ENCODE measurements at regions of chr11 and their contacts with region 1.

Region 1: DNA sequence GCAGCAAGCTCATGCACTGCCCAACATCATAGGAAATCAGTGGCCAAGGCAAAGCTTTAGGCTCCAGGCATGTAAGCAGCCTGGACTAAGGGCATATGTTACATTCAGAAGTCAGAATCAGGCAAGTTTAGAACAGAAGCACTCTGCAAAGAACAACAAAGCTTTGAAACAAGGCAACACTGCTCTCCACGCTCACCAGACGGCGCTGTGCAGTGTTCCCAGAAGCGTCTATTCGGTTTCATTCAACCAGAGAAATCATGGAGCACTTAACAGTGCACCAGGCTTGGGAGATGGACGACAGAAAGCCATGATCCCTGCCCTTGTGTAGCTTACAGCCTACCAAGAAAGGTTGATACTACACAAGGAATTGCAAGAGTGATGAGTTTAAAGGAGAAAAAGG is 555.8 kb downstream of the BUD13 start:
- DNase-seq: peak; percentile 75
- ATAC-seq: peak; percentile 71
- H3K4me3 Mint-ChIP-seq: no peak overlapping the region
- H3K27ac Mint-ChIP-seq: no peak overlapping the region
- H3K4me1 Mint-ChIP-seq: peaks cover 13% of the 10 kb centered on the region
- H3K27me3 Mint-ChIP-seq: no peaks in the 10 kb centered on the region
- CTCF ChIP-seq: peak; percentile 71

Region 2: GRCh38 chr11:116170526-116171122 is 46.4 kb before region 1 on chr11:
- CTCF ChIA-PET with region 1: interaction called, 70 read pairs
- POLR2A ChIA-PET with region 1: no interaction called
- DNase-seq: peak; percentile 41
- ATAC-seq: peak; percentile 38
- H3K4me3 Mint-ChIP-seq: no peak overlapping the region
- H3K27ac Mint-ChIP-seq: no peak overlapping the region
- H3K4me1 Mint-ChIP-seq: peaks cover 33% of the 10 kb centered on the region
- H3K27me3 Mint-ChIP-seq: no peaks in the 10 kb centered on the region; the same call in 1 of the 2 replicates
- CTCF ChIP-seq: no peak

Region 3: GRCh38 chr11:116193321-116194131 is 23.5 kb before region 1 on chr11:
- CTCF ChIA-PET with region 1: interaction called, 33 read pairs
- POLR2A ChIA-PET with region 1: no interaction called
- DNase-seq: peak; percentile 74
- ATAC-seq: peak; percentile 72
- H3K4me3 Mint-ChIP-seq: peak overlapping the region; percentile 76
- H3K27ac Mint-ChIP-seq: peak overlapping the region; percentile 88
- H3K4me1 Mint-ChIP-seq: peaks cover 45% of the 10 kb centered on the region
- H3K27me3 Mint-ChIP-seq: peaks cover 11% of the 10 kb centered on the region
- CTCF ChIP-seq: no peak

Region 4: DNA sequence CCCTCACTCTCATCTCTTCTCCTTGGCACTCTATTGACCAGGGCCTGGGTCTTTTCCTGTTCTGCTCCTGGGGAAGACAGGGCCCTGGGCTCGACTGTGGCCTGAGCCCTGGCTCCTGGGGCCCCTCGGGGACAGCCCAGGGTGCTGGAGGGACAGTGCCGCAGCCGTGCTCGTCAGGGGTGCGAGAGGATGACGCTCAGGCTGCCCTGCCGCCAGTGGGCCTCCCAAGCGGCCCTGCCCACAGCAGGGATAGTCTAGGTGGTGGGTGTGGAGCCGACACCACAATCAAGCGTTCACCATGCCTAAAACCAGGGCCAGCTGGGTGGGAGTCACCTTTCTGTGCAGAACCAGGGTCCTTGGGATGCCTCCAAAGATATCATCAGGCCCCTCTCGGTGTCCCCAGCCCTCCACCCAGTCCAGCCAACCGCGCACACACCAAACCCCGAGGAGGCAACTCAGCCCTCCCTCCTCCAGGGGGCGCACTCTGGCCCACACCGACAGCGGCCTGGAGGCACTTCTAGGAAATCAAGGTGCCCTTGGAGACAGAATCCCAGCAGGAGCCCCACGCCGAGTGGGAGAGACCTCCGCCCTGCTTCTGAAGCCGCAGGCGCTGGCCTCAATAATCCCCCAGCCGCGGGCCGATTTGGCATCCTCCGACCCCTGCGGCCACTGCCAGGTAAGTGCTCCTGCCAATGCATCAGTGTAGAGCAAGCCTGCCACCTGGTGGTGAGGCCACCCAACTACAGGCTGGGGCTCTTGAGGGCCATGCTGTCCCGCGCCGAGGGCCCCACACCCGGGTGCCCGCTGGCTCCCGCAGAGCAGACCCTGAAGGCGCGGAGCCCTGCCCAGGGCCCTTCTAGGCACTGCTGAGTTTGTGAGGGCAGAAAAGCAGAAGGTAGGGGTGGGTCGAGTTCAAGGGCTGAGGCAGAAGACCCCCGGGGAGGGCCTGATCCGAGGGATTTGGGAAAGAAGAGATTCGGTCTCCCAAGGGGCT is 59.3 kb after region 1 on chr11:
- CTCF ChIA-PET with region 1: interaction called, 23 read pairs
- POLR2A ChIA-PET with region 1: no interaction called
- DNase-seq: peak; percentile 97
- ATAC-seq: peak; percentile 88
- H3K4me3 Mint-ChIP-seq: peak overlapping the region; percentile 72
- H3K27ac Mint-ChIP-seq: no peak overlapping the region
- H3K4me1 Mint-ChIP-seq: 0 out of 2 replicates have a peak, but pooled peaks cover 2% of the 10 kb centered on the region
- H3K27me3 Mint-ChIP-seq: no peaks in the 10 kb centered on the region
- CTCF ChIP-seq: peak; percentile 99

Region 5: GRCh38 chr11:116287861-116288260 is 70.9 kb after region 1 on chr11:
- CTCF ChIA-PET with region 1: no interaction called
- POLR2A ChIA-PET with region 1: no interaction called
- DNase-seq: no peak
- ATAC-seq: no peak
- H3K4me3 Mint-ChIP-seq: no peak overlapping the region
- H3K27ac Mint-ChIP-seq: no peak overlapping the region
- H3K4me1 Mint-ChIP-seq: no peaks in the 10 kb centered on the region
- H3K27me3 Mint-ChIP-seq: no peaks in the 10 kb centered on the region; the same call in 1 of the 2 replicates
- CTCF ChIP-seq: no peak

Region 6: GRCh38 chr11:116445108-116446047 is 228.4 kb after region 1 on chr11:
- CTCF ChIA-PET with region 1: interaction called, 12 read pairs
- POLR2A ChIA-PET with region 1: no interaction called
- DNase-seq: peak; percentile 53
- ATAC-seq: peak; percentile 94
- H3K4me3 Mint-ChIP-seq: peak overlapping the region; percentile 53
- H3K27ac Mint-ChIP-seq: peak overlapping the region; percentile 96
- H3K4me1 Mint-ChIP-seq: peaks cover 54% of the 10 kb centered on the region
- H3K27me3 Mint-ChIP-seq: peaks cover 4% of the 10 kb centered on the region
- CTCF ChIP-seq: no peak